Naive thymus-derived CD4-positive, alpha-beta T cell (primary cell): ENCODE measurements at regions of chr11 and their contacts with region 1.

Region 1: DNA sequence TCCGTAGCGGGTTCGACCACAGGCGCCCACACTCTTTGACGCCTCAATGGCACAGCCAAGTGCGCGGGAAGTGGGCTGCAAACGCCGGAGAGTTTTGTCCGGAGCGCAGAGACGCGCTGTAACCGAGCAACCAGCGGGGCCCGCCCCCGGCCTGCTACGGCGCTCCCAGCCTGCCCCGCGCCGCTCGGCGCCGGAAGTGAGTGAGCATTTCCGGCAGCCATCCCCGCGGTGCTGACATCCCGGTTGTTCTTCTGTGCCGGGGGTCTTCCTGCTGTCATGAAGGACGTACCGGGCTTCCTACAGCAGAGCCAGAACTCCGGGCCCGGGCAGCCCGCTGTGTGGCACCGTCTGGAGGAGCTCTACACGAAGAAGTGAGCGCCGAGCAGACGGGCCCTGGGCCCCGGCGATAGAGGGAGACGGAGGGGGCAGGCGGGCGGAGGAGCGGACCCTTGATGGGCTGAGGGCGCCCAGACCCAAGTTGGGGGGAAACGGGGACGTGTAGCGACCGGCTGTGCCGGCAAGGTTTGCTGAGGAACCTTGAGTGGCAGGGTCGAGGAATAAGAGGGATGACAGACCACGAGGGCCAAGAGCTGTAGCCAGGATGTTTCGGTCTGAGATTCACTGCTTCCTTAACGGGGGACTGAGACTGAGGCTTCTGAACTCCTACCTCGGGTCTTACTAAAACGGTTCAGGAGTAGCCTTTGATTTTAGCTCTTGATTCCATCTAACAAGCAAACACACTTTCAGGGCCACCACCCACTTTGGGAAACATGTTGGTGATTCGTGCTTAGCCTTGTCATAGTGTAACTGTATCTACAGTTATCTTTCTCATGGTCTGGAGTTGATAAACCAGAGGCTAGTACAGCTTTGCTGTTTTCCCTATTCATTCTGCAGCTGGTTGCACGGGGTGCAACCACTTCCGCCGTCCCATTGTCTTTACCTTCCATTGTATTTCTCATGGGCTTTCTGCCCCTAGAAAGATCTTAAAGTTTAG is at the start of gene PSMD13:
- DNase-seq: peak; percentile 82 to 92 (median 88)
- ATAC-seq: peak; percentile 88
- H3K4me3 ChIP-seq: peak within 1 kb of the TSS; percentile 100
- H3K4me3 Mint-ChIP-seq: peak within 1 kb of the TSS; percentile 84 to 99 (median 96)
- H3K27ac ChIP-seq: peak within 1 kb of the TSS; percentile 97
- H3K27ac Mint-ChIP-seq: peak within 1 kb of the TSS; percentile 84 to 100 (median 100)
- H3K4me1 ChIP-seq: peaks cover 17 to 23% of the 10 kb centered on the region in 2 donors
- H3K4me1 Mint-ChIP-seq: peaks cover 26 to 66% (median 53%) of the 10 kb centered on the region in 7 donors
- H3K27me3 ChIP-seq: no peaks in the 10 kb centered on the region
- H3K27me3 Mint-ChIP-seq: no peaks in the 10 kb centered on the region
- total RNA-seq, gene PSMD13: 64.3 to 172 (median 86.9) TPM

Region 2: GRCh38 chr11:288328-289144 is 51.5 kb after region 1 on chr11 and contains the start of gene PGGHG:
- CTCF ChIA-PET with region 1: interaction called, 3 read pairs
- POLR2A ChIA-PET with region 1: interaction called, 13 read pairs
- intact Hi-C with region 1: loop called in 1 of 2 experiments (anchors 5 kb)
- DNase-seq: peak in 5 of 9 donors; percentile 40 to 72 (median 49)
- ATAC-seq: peak; percentile 65
- H3K4me3 ChIP-seq: peak within 1 kb of the TSS; percentile 64
- H3K4me3 Mint-ChIP-seq: peak within 1 kb of the TSS; percentile 88 to 100 (median 98)
- H3K27ac ChIP-seq: peak within 1 kb of the TSS; percentile 100
- H3K27ac Mint-ChIP-seq: peak within 1 kb of the TSS; percentile 89 to 100 (median 98)
- H3K4me1 ChIP-seq: peaks cover 16% of the 10 kb centered on the region in 2 donors
- H3K4me1 Mint-ChIP-seq: peaks cover 22 to 52% (median 38%) of the 10 kb centered on the region in 7 donors
- H3K27me3 ChIP-seq: no peaks in the 10 kb centered on the region
- H3K27me3 Mint-ChIP-seq: peaks cover 0 to 14% (median 0%) of the 10 kb centered on the region in 5 donors
- total RNA-seq, gene PGGHG: 325 to 656 (median 348) TPM

Region 3: GRCh38 chr11:355581-356458 is 118.7 kb after region 1 on chr11:
- CTCF ChIA-PET with region 1: no interaction called
- POLR2A ChIA-PET with region 1: interaction called, 6 read pairs
- intact Hi-C with region 1: loop called in 1 of 2 experiments (anchors 2 kb)
- DNase-seq: peak; percentile 74 to 92 (median 90)
- ATAC-seq: peak; percentile 89
- H3K4me3 ChIP-seq: peak overlapping the region; percentile 66
- H3K4me3 Mint-ChIP-seq: peak overlapping the region in 8 of 10 donors; percentile 83 to 93 (median 88)
- H3K27ac ChIP-seq: peak overlapping the region; percentile 97
- H3K27ac Mint-ChIP-seq: peak overlapping the region in 6 of 9 donors; percentile 89 to 99 (median 98)
- H3K4me1 ChIP-seq: peaks cover 9 to 19% of the 10 kb centered on the region in 2 donors
- H3K4me1 Mint-ChIP-seq: peaks cover 29 to 45% (median 37%) of the 10 kb centered on the region in 7 donors
- H3K27me3 ChIP-seq: no peaks in the 10 kb centered on the region
- H3K27me3 Mint-ChIP-seq: peaks cover 0 to 6% (median 0%) of the 10 kb centered on the region in 5 donors

Region 4: GRCh38 chr11:406978-407739 is 170.1 kb after region 1 on chr11:
- CTCF ChIA-PET with region 1: no interaction called
- POLR2A ChIA-PET with region 1: interaction called, 5 read pairs
- intact Hi-C with region 1: loop called (anchors 1 to 2 kb)
- DNase-seq: peak; percentile 80 to 93 (median 92)
- ATAC-seq: peak; percentile 90
- H3K4me3 ChIP-seq: no peak overlapping the region
- H3K4me3 Mint-ChIP-seq: peak overlapping the region in 6 of 10 donors; percentile 12 to 60 (median 38)
- H3K27ac ChIP-seq: peak overlapping the region; percentile 75
- H3K27ac Mint-ChIP-seq: peak overlapping the region in 7 of 9 donors; percentile 21 to 85 (median 51)
- H3K4me1 ChIP-seq: peaks cover 9 to 13% of the 10 kb centered on the region in 2 donors
- H3K4me1 Mint-ChIP-seq: peaks cover 4 to 21% (median 6%) of the 10 kb centered on the region in 7 donors
- H3K27me3 ChIP-seq: no peaks in the 10 kb centered on the region
- H3K27me3 Mint-ChIP-seq: no peaks in the 10 kb centered on the region

Region 5: GRCh38 chr11:416757-417621 is 179.9 kb after region 1 on chr11:
- CTCF ChIA-PET with region 1: no interaction called
- POLR2A ChIA-PET with region 1: no interaction called
- intact Hi-C with region 1: loop called in 1 of 2 experiments (anchors 2 kb)
- DNase-seq: peak; percentile 34 to 71 (median 47)
- ATAC-seq: peak; percentile 38
- H3K4me3 ChIP-seq: peak overlapping the region; percentile 92
- H3K4me3 Mint-ChIP-seq: peak overlapping the region; percentile 48 to 100 (median 96)
- H3K27ac ChIP-seq: peak overlapping the region; percentile 75
- H3K27ac Mint-ChIP-seq: peak overlapping the region in 4 of 9 donors; percentile 68 to 78 (median 70)
- H3K4me1 ChIP-seq: peaks cover 11 to 21% of the 10 kb centered on the region in 2 donors
- H3K4me1 Mint-ChIP-seq: peaks cover 10 to 37% (median 17%) of the 10 kb centered on the region in 7 donors
- H3K27me3 ChIP-seq: no peaks in the 10 kb centered on the region
- H3K27me3 Mint-ChIP-seq: no peaks in the 10 kb centered on the region

Region 6: GRCh38 chr11:555780-556661 is 318.9 kb after region 1 on chr11:
- CTCF ChIA-PET with region 1: no interaction called
- POLR2A ChIA-PET with region 1: no interaction called
- intact Hi-C with region 1: no loop called
- DNase-seq: peak in 3 of 9 donors; percentile 33 to 37 (median 33)
- ATAC-seq: no peak
- H3K4me3 ChIP-seq: peak overlapping the region; percentile 44
- H3K4me3 Mint-ChIP-seq: peak overlapping the region in 9 of 10 donors; percentile 32 to 71 (median 53)
- H3K27ac ChIP-seq: no peak overlapping the region
- H3K27ac Mint-ChIP-seq: no peak overlapping the region
- H3K4me1 ChIP-seq: peaks cover 12 to 20% of the 10 kb centered on the region in 2 donors
- H3K4me1 Mint-ChIP-seq: peaks cover 4 to 10% (median 9%) of the 10 kb centered on the region in 7 donors
- H3K27me3 ChIP-seq: no peaks in the 10 kb centered on the region
- H3K27me3 Mint-ChIP-seq: peaks cover 0 to 18% (median 0%) of the 10 kb centered on the region in 5 donors

Region 7: DNA sequence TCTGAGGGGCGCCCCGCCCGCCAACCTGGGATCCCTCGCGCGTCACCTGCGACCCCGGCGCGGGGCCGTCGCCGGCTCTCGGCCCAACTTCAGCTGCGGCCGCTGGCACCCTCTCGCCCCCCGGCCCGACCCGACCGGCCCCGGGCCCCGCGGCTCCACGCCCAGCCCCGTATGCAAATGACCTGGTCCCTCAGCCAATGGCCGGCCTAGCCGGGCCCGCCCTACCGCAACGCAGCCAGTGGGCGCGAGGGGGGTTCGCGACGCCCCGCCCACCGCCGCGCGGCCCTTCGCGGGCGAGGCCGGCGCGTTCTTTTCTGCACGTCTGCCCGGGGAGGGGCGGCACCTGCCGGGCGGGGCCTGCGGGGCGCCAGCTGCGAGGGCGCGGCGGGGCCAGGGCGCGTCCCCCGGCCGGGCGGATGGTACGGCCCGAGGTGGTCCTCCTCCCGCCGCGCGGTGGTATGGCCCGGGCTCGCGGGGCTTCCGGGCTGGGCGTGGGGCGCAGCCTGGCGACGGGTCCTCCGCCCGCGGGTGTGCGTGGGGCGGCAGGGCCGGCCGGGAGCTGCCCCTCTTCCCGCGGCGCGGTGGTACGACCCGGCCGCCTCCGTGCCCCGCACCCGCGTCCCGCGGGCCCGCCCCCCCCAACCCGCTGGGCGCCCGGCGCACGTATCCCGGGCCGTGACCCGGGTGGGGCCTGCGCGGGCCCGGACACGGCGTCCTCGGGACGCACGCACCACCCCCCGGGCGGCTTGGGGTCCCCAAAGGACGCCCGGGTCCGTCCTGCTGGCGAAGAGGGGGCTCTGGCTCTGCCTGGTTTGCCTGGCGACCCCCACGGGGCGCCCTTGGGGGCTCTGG is 331.5 kb after region 1 on chr11:
- CTCF ChIA-PET with region 1: no interaction called
- POLR2A ChIA-PET with region 1: no interaction called
- intact Hi-C with region 1: no loop called
- DNase-seq: peak; percentile 87 to 99 (median 95)
- ATAC-seq: peak; percentile 95
- H3K4me3 ChIP-seq: peak overlapping the region; percentile 73
- H3K4me3 Mint-ChIP-seq: peak overlapping the region; percentile 69 to 84 (median 77)
- H3K27ac ChIP-seq: peak overlapping the region; percentile 65
- H3K27ac Mint-ChIP-seq: peak overlapping the region in 3 of 9 donors; percentile 40 to 82 (median 68)
- H3K4me1 ChIP-seq: peaks cover 6 to 8% of the 10 kb centered on the region in 2 donors
- H3K4me1 Mint-ChIP-seq: peaks cover 0 to 16% (median 3%) of the 10 kb centered on the region in 7 donors
- H3K27me3 ChIP-seq: no peaks in the 10 kb centered on the region
- H3K27me3 Mint-ChIP-seq: no peaks in the 10 kb centered on the region

Region 8: GRCh38 chr11:2041153-2041552 is 1804.1 kb after region 1 on chr11:
- CTCF ChIA-PET with region 1: no interaction called
- POLR2A ChIA-PET with region 1: no interaction called
- intact Hi-C with region 1: no loop called
- DNase-seq: no peak
- ATAC-seq: no peak
- H3K4me3 ChIP-seq: no peak overlapping the region
- H3K4me3 Mint-ChIP-seq: no peak overlapping the region
- H3K27ac ChIP-seq: no peak overlapping the region
- H3K27ac Mint-ChIP-seq: no peak overlapping the region
- H3K4me1 ChIP-seq: no peaks in the 10 kb centered on the region
- H3K4me1 Mint-ChIP-seq: no peaks in the 10 kb centered on the region
- H3K27me3 ChIP-seq: no peaks in the 10 kb centered on the region
- H3K27me3 Mint-ChIP-seq: no peaks in the 10 kb centered on the region